ENCODE measurements at regions of chr21 and their contacts with region 1.

Region 1: GRCh38 chr21:37366482-37367316 is at the start of gene DYRK1A:
- DNase-seq: peak; percentile 98
- ATAC-seq: peak; percentile 82
- H3K4me3 Mint-ChIP-seq: peak within 1 kb of the TSS; percentile 99
- H3K27ac Mint-ChIP-seq: peak within 1 kb of the TSS; percentile 100
- H3K4me1 Mint-ChIP-seq: peaks cover 42% of the 10 kb centered on the region
- H3K27me3 Mint-ChIP-seq: no peaks in the 10 kb centered on the region
- total RNA-seq, gene DYRK1A: 51.1 to 76.9 TPM

Region 2: GRCh38 chr21:36966066-36966820 is 400.5 kb before region 1 on chr21 and contains the start of gene HLCS:
- CTCF ChIA-PET with region 1: no interaction called
- POLR2A ChIA-PET with region 1: no interaction called
- intact Hi-C with region 1: loop called in 1 of 2 experiments (anchors 5 kb)
- DNase-seq: peak; percentile 84
- ATAC-seq: peak; percentile 90
- H3K4me3 Mint-ChIP-seq: peak within 1 kb of the TSS; percentile 73
- H3K27ac Mint-ChIP-seq: peak within 1 kb of the TSS; percentile 88
- H3K4me1 Mint-ChIP-seq: peaks cover 9% of the 10 kb centered on the region
- H3K27me3 Mint-ChIP-seq: no peaks in the 10 kb centered on the region
- total RNA-seq, gene HLCS: 14.3 to 15.0 TPM

Region 3: DNA sequence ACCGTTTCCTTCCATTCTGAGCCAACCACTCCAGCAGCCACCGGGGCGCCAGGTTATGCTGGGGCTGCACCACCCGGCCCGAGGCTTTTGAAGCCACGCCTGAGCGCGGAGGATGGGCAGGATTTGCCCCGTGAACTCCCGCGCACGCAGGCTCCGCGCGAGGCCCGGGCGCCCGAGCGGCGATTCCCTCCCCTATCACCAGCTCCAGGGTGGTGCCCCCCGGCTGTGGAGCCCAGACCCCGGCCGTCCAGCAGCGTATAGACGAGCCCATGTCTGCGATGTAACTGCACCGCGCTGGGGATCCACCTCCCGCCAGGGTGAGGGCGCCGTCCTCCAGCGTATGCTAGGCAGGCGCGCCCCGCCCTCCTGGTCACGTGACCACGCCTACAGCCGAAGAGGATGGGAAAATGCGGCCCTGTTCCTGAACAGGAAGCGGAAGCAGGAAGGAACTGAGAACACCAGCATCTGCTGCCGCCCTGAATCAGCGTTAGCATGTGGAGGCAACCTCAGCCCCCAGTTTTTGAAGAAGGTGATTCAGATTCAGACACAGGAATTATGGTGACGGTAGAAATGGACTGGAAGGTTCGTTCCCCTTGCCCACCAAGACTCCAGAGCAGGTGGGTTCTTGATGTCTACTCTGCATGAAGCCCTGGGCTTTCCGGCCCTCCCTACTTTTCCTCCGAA is 145.6 kb before region 1 on chr21:
- CTCF ChIA-PET with region 1: no interaction called
- POLR2A ChIA-PET with region 1: no interaction called
- intact Hi-C with region 1: loop called (anchors 1 to 2 kb)
- DNase-seq: peak; percentile 98
- ATAC-seq: peak; percentile 84
- H3K4me3 Mint-ChIP-seq: peak overlapping the region; percentile 82
- H3K27ac Mint-ChIP-seq: peak overlapping the region; percentile 97
- H3K4me1 Mint-ChIP-seq: peaks cover 47% of the 10 kb centered on the region
- H3K27me3 Mint-ChIP-seq: no peaks in the 10 kb centered on the region

Region 4: DNA sequence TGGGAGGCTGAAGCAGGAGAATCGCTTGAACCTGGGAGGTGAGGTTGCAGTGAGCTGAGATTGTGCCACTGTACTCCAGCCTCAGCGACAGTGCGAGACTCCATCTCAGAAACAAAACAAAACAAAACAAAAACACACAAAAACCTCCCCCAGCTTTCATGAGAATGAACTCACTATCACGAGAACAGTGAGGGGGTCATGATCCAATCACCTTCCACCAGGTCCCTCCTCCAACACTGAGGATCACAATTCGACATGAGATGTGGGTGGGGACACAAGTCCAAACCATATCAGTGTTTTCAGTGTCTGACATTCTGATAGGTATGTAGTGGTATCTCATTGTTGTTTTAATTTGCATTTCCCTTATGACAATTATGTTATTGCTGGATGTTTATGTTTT is 31.6 kb before region 1 on chr21:
- CTCF ChIA-PET with region 1: no interaction called
- POLR2A ChIA-PET with region 1: no interaction called
- intact Hi-C with region 1: no loop called
- DNase-seq: no peak
- ATAC-seq: no peak
- H3K4me3 Mint-ChIP-seq: no peak overlapping the region
- H3K27ac Mint-ChIP-seq: no peak overlapping the region
- H3K4me1 Mint-ChIP-seq: peaks cover 6% of the 10 kb centered on the region
- H3K27me3 Mint-ChIP-seq: no peaks in the 10 kb centered on the region

Region 5: GRCh38 chr21:37380349-37381323 is 13.9 kb after region 1 on chr21:
- CTCF ChIA-PET with region 1: interaction called, 10 read pairs
- POLR2A ChIA-PET with region 1: interaction called, 3 read pairs
- intact Hi-C with region 1: loop called in 1 of 2 experiments (anchors 2 kb)
- DNase-seq: no peak
- ATAC-seq: no peak
- H3K4me3 Mint-ChIP-seq: no peak overlapping the region
- H3K27ac Mint-ChIP-seq: peak overlapping the region; percentile 25
- H3K4me1 Mint-ChIP-seq: peaks cover 85% of the 10 kb centered on the region
- H3K27me3 Mint-ChIP-seq: no peaks in the 10 kb centered on the region

Region 6: GRCh38 chr21:37463083-37463801 is 96.5 kb after region 1 on chr21:
- CTCF ChIA-PET with region 1: interaction called, 12 read pairs
- POLR2A ChIA-PET with region 1: interaction called, 3 read pairs
- intact Hi-C with region 1: loop called (anchors 1 to 2 kb)
- DNase-seq: peak; percentile 23
- ATAC-seq: peak; percentile 55
- H3K4me3 Mint-ChIP-seq: no peak overlapping the region
- H3K27ac Mint-ChIP-seq: peak overlapping the region; percentile 71
- H3K4me1 Mint-ChIP-seq: peaks cover 70% of the 10 kb centered on the region
- H3K27me3 Mint-ChIP-seq: no peaks in the 10 kb centered on the region

Region 7: GRCh38 chr21:38126669-38127303 is 760.1 kb after region 1 on chr21:
- CTCF ChIA-PET with region 1: no interaction called
- POLR2A ChIA-PET with region 1: no interaction called
- intact Hi-C with region 1: no loop called
- DNase-seq: peak; percentile 80
- ATAC-seq: peak; percentile 76
- H3K4me3 Mint-ChIP-seq: no peak overlapping the region
- H3K27ac Mint-ChIP-seq: no peak overlapping the region
- H3K4me1 Mint-ChIP-seq: no peaks in the 10 kb centered on the region
- H3K27me3 Mint-ChIP-seq: peaks cover 11% of the 10 kb centered on the region

Region 8: GRCh38 chr21:39349211-39350093 is 1982.8 kb after region 1 on chr21:
- CTCF ChIA-PET with region 1: no interaction called
- POLR2A ChIA-PET with region 1: no interaction called
- intact Hi-C with region 1: loop called in 1 of 2 experiments (anchors 5 kb)
- DNase-seq: peak; percentile 99
- ATAC-seq: peak; percentile 89
- H3K4me3 Mint-ChIP-seq: peak overlapping the region; percentile 92
- H3K27ac Mint-ChIP-seq: peak overlapping the region; percentile 100
- H3K4me1 Mint-ChIP-seq: peaks cover 33% of the 10 kb centered on the region
- H3K27me3 Mint-ChIP-seq: no peaks in the 10 kb centered on the region